ENCODE measurements at regions of chr9 and their contacts with region 1.

Region 1: DNA sequence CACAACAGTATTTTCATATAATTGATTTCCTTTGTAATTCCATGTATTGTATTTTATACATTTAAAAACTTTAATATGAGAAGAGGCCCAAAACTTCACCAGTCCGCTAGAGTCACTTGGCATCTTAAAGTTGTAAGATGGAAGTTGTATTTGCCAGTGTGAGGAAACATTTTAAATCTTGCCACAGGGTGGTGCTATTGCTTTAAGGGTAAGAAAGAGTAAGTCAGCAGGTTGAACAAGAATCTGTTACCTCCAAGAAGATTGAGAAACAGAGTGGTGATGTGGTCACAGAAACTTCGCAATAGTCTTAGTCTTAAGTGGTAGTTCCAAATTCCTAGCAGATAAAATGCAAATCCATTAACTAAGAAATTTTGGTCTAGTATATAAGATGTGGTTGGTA is 39.8 kb upstream of the RANBP6 start:
- DNase-seq: no peak
- ATAC-seq: peak; percentile 86 to 96 (median 93)
- H3K4me3 ChIP-seq: no peak overlapping the region
- H3K27ac ChIP-seq: no peak overlapping the region
- H3K4me1 ChIP-seq: no peaks in the 10 kb centered on the region
- H3K27me3 ChIP-seq: no peaks in the 10 kb centered on the region
- CTCF ChIP-seq: peak; percentile 55 to 78 (median 65)
- POLR2A ChIP-seq: no peak

Region 2: DNA sequence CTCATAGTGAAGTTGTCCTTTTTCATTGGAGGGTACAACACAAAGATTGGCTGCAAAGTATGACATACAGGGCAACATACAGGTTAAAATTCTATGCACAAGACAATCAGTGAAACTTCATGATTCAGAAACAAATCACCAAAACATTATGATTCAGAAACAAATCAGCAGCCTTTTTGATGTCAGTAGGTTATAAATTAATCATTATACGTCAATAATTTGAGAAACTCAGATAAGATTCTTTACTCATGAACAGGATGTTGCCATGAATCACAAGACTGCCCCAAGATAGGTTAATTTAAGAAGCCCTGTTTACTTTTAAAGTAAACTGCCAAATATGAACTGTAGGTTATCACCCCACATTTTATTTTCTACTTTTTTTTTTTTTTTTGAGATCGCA is 98.2 kb after region 1 on chr9:
- intact Hi-C with region 1: no loop called
- DNase-seq: no peak
- ATAC-seq: peak in 1 of 4 donors; percentile 64
- H3K4me3 ChIP-seq: no peak overlapping the region
- H3K27ac ChIP-seq: no peak overlapping the region
- H3K4me1 ChIP-seq: peaks cover 0 to 3% (median 0%) of the 10 kb centered on the region in 4 donors
- H3K27me3 ChIP-seq: no peaks in the 10 kb centered on the region
- CTCF ChIP-seq: no peak
- POLR2A ChIP-seq: no peak

Region 3: DNA sequence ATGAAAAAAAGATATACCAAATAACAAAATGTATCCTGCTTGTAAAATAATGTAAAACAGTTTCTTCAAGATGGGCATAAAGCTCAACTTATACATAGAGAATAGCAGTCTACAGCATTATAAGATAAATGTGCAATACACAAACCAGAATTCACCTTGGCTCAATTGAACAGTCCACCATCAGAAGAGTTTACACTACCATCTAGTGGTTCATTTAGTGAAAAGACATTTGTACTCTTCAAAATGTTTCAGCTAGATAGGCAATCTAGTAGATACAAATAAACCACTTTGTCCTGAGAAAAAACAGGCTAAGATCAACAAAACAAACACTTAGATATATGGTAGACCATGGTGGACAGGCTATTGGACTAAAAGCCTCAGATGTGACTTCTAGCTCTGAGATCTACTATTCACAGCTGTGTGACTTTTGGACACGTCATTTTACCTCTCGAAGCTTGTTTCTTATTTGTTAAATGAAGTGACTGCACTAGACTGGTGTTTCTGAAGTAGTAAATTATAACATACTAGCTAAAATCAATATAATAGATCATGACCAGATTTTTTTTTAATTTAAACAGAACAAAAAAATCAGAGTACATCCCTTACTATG is 250.8 kb after region 1 on chr9:
- intact Hi-C with region 1: loop called in 1 of 2 experiments (anchors 10 kb)
- DNase-seq: no peak
- ATAC-seq: peak; percentile 83 to 90 (median 86)
- H3K4me3 ChIP-seq: no peak overlapping the region
- H3K27ac ChIP-seq: no peak overlapping the region
- H3K4me1 ChIP-seq: no peaks in the 10 kb centered on the region
- H3K27me3 ChIP-seq: no peaks in the 10 kb centered on the region
- CTCF ChIP-seq: peak; percentile 58 to 83 (median 66)
- POLR2A ChIP-seq: no peak

Measured in right lobe of liver (tissue), 6 donors.